GM10248 (cell line): ENCODE measurements at regions of chr11 and their contacts with region 1.

Region 1: DNA sequence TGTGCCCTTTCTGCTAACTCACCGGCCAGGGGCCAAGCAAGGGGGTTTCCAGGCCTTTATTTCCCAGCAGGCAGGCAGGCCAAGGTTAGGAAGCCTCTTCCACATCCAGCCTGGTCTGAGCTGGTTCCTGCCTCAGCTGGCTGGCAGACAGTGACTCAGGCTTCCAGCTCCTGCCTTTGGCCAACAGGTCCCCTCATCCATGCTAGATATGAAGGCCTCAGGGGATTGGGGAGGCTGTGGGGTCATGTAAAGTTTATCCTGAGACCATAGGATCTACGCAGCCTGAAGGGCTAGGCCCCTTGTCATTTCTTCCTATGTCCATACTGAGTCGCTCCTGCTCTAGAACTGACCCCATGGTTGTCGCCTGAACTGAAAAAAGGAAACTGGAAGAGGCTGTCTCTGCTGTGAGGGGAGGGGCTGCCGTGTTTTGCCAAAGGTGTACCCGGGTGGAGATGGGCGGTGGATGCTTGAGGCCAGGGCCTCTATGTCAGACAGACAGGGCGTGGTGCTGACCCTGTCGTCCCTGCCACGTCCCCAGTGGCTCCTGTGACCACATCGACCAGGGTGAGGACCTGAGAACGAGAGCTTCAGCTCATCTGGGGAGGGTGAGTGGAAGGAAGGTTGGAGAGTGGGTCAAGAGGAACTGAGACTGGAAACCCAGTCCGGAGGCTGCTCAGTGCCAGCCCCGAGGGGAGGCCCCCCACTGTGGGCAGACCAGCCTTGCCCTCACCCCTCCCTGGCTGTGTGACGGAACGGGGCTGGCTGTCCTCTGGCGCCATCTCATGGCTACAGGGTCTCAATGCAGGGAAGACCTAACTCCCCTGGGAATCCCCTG is 17.0 kb downstream of the P2RY6 start:
- DNase-seq: peak; percentile 89
- CTCF ChIP-seq: peak; percentile 90

Region 2: GRCh38 chr11:72831513-72832300 is 457.4 kb before region 1 on chr11:
- CTCF ChIA-PET with region 1: interaction called, 10 read pairs
- POLR2A ChIA-PET with region 1: no interaction called
- DNase-seq: no peak
- CTCF ChIP-seq: peak; percentile 87

Region 3: DNA sequence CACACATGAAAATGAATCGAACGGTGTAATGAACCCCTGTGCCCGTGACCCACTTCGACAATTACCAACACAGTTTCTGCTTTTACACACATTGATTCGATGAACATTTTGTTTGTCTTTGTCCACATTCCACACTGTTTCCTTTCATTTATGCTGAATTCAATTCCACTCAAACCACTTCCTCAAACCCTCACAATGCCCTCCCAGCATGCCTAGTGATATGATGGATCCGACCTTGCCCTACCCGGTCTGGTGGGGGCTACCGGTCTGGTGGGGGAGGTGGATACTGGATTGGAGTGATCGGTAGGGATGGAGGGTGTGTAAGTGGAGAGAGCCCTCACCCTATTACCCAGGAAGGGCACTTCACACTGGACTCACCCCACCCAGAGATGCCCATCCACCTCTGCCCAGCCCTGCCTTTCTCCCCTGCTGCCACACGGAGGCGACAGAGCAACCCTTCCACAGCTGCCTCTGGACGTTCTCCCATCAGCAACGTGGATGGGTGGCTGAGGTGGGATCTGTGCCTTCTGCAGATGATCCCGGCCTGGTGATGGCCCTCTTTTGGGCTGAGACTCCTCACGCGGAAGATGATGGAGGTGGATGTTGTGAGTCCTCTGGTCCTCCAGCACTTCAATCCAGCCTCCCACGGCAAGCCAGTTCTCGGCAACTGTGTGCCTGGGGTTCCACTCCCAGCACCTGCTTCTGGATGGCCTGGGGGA is 104.0 kb before region 1 on chr11:
- CTCF ChIA-PET with region 1: interaction called, 38 read pairs
- POLR2A ChIA-PET with region 1: no interaction called
- DNase-seq: peak; percentile 72
- CTCF ChIP-seq: peak; percentile 95

Region 4: DNA sequence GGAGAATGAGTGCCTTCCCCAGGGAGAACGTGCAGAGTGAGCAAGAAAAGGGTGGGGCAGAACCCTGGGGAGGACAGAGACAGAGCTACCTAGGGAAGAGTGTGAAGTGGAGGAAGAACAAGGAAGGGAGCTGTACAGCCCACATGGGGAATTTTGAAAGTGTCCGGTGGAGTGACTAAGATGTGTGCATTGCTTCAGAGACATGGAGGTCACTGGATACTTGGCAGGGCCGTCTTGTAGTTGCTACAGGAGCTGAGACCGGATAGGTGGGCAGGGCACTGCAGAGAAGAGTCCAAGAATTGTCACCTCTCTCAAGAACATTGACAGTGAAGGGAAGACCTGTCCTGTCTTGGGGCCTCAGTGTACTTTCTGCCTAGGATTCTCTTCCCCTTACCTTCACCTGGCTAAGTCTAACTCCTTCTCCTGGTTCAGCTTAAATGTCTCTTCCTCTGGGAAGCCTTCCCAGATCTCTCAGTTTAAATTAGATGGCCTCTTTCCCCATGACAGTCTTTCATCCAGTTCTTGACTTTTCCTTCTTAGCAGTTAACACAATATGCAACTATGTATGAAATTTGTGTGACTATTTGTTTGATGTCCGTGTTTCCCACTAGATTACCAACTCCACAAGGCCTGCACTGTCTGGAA is 26.1 kb before region 1 on chr11:
- CTCF ChIA-PET with region 1: interaction called, 19 read pairs
- POLR2A ChIA-PET with region 1: no interaction called
- DNase-seq: no peak
- CTCF ChIP-seq: no peak

Region 5: DNA sequence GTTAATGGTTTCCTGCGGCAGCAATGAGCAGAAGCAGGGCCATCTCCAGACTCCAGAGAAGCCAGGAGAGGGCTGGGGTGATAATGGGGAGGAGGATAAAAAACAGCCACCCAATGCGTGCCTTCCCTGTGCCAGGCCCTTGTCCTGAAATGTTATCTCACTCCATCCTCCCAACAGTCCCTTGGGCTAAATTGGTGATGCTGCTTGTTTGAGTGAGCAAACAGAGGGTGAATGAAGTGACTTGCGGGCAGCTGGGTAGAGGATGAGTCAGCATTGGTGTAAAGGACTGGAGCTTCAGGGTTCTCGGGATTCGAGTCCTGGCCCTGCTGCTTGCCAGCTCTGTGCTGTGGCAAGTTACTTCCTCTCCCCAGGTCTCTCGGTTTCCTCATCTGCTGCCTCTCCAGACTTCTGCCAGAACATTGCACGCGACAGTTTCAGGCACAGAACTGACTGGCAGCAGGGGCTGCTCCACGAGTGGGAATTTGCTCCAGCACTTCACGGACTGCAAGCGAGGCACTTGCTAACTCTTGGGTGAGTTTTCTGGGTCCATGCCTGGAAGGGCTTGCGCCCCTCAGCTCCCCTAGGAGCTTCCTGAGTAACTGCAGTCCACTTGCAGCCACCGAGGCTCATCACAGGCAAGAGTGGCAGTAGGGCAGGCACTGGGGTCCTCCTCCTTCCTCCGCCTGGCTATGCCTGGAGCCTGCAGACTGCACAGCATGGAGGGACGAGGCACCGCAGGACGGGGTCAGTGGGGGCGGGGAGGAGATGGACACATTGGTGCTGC is 17.0 kb before region 1 on chr11 and contains the start of gene P2RY6:
- CTCF ChIA-PET with region 1: interaction called, 20 read pairs
- POLR2A ChIA-PET with region 1: no interaction called
- DNase-seq: no peak
- CTCF ChIP-seq: no peak

Region 6: DNA sequence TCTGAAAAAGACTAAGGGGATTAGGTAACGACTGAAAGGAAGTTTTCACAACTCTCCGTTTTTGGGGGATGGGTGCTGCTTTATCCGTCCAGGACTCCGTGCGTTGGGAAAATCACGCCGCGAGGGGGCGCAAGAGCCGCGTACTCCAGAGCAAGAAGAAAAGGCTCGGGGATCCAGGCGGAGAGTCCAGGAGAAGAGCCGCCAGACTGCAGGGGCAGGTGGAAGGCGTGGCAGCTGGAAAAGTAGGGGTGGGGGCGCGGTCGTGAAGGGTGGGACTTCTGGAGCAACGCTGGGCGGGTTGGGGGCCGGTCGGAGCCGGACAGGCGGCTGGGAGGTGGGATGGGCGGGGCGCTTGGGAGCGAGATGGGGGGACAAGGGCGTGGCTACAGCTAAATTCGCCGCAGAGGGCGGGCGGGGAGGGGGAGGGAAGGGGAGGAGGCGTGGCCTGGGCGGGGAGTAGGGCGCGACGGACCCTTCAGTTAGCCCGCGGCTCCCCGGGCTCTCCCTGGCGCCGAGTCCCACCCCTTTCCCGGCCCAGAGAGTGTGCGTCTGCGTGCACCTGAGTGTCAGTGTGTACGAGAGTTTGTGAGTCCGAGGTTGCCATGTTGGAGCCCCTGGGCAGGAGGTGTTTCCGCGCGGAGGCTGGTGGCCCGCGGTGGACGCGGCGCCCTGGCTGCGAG is 18.4 kb after region 1 on chr11:
- CTCF ChIA-PET with region 1: interaction called, 209 read pairs
- POLR2A ChIA-PET with region 1: no interaction called
- DNase-seq: peak; percentile 95
- CTCF ChIP-seq: peak; percentile 89

Region 7: GRCh38 chr11:73325036-73325981 is 36.2 kb after region 1 on chr11:
- CTCF ChIA-PET with region 1: interaction called, 11 read pairs
- POLR2A ChIA-PET with region 1: no interaction called
- DNase-seq: peak; percentile 88
- CTCF ChIP-seq: no peak